ENCODE measurements at regions of chr3 and their contacts with region 1.

Region 1: DNA sequence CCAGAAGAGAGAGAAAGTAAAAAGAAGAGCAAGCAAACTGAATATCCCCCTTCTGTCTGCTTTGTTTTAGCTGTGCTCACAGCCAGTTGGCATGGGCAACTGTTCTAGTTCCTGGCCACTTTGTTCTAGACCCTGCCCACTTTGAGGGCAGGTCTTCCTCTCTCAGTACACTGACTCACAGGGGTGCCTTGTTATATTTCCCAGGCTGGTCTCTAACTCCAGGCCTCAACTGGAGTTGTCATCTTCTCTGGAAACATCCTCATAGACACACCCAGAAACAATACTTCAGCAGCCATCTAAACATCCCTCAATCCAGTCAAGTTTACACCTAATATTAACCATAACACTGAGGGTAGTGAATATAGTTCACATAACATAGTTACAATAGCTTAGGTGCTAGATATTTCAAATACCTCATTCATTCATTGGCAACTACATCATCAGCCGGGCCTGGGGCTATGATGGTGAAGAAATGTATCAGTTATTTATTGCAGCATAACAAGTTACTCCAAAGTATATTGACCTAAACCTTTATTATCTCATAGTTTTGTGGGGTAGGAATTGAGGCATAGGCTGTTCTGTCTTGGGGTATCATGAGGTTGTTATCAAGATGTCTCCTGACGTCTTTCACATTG is 106.0 kb downstream of the UBE2E2 start:
- DNase-seq: no peak
- ATAC-seq: no peak
- H3K4me3 ChIP-seq: no peak overlapping the region
- H3K27ac ChIP-seq: no peak overlapping the region
- H3K4me1 ChIP-seq: peaks cover 14% of the 10 kb centered on the region
- H3K27me3 ChIP-seq: no peaks in the 10 kb centered on the region
- CTCF ChIP-seq: no peak

Region 2: DNA sequence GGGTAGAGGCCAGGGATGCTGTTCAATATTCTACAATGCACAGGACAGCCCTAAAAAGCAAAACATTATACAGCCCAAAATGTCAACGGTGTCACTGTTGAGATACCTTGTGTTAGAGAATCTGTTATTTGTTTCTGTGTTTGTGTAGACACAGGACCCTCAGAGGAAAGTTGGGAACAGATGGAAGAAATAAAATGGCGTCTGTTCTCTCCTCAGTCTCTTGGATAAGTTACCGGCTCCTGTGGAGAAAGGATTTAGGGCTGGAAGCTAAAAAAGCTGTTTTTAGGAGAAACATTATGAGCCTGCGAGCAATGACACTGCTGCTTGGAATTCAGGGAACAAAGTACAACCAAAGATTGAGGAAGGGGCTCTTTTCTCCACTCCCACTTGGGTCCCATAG is 869.5 kb before region 1 on chr3:
- intact Hi-C with region 1: no loop called
- DNase-seq: no peak
- ATAC-seq: no peak
- H3K4me3 ChIP-seq: no peak overlapping the region
- H3K27ac ChIP-seq: no peak overlapping the region
- H3K4me1 ChIP-seq: no peaks in the 10 kb centered on the region
- H3K27me3 ChIP-seq: no peaks in the 10 kb centered on the region
- CTCF ChIP-seq: no peak

Region 3: GRCh38 chr3:23874359-23875112 is 565.4 kb after region 1 on chr3:
- intact Hi-C with region 1: loop called (anchors 5 kb)
- DNase-seq: no peak
- ATAC-seq: no peak
- H3K4me3 ChIP-seq: no peak overlapping the region
- H3K27ac ChIP-seq: no peak overlapping the region
- H3K4me1 ChIP-seq: peaks cover 24% of the 10 kb centered on the region
- H3K27me3 ChIP-seq: no peaks in the 10 kb centered on the region
- CTCF ChIP-seq: no peak